PC-9 (cell line): ENCODE measurements at regions of chr5 and their contacts with region 1.

Region 1: GRCh38 chr5:88488130-88488529 is 219.5 kb upstream of the TMEM161B start:
- DNase-seq: no peak
- H3K4me3 ChIP-seq: no peak overlapping the region
- H3K27ac ChIP-seq: no peak overlapping the region
- H3K4me1 ChIP-seq: no peaks in the 10 kb centered on the region
- H3K27me3 ChIP-seq: no peaks in the 10 kb centered on the region
- CTCF ChIP-seq: no peak

Region 2: GRCh38 chr5:88304356-88304755 is 183.8 kb before region 1 on chr5:
- CTCF ChIA-PET with region 1: no interaction called
- POLR2A ChIA-PET with region 1: interaction called, 10 read pairs
- intact Hi-C with region 1: no loop called
- DNase-seq: no peak
- H3K4me3 ChIP-seq: no peak overlapping the region
- H3K27ac ChIP-seq: no peak overlapping the region
- H3K4me1 ChIP-seq: no peaks in the 10 kb centered on the region
- H3K27me3 ChIP-seq: no peaks in the 10 kb centered on the region
- CTCF ChIP-seq: no peak